Activated CD8-positive, alpha-beta T cell treated with anti-CD3 and anti-CD28 coated beads, Interleukin-2, amount 10 ng/mL, durations not matched to agents 7 days and 5 days (primary cell): ENCODE measurements at regions of chr4 and their contacts with region 1.

Region 1: DNA sequence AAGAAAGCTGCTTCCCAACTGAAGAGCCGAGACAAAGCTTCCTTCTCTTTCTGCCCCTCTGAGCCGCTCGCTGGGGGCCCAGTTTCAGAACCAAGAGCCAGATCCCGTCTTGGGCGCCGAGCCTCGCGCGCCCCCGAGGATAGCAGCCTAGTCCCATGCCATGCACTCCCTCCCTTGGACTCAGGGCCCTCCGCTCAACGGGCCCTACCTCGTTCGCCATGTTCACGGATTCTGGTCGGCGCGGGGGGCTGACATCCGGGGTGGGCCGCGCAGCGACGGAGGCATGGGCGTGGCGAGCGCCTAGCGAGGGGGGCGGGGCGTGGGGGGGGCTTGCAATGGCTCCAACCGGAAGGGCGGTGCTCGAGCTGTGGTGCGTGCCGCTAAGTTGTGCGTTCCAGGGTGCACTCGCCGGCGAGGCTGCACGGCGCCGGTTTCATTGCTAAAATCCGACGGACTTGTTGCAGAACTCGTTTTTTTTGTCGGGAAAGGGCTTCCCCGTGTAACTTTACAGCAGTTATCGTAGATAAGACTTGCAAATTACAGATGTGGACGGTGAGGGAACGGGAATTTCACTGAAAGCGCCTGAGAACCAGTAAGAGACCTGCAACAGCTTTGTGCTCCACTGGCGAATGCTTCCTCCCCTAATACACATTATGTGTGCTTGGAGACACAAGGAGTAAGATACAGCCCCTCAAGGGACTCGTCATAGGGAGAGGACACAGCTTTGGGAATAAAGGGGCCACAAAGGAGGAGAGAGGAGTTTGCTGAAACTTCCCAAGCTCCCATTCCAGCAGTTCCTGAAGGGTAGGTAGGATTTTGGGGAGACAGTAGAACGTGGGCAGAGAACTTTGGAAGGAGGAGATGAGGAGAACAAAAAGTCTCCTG is at the start of gene ADH5:
- DNase-seq: peak; percentile 94
- ATAC-seq: peak; percentile 97
- H3K4me3 Mint-ChIP-seq: peak within 1 kb of the TSS; percentile 97
- H3K27ac Mint-ChIP-seq: peak within 1 kb of the TSS; percentile 99
- H3K4me1 Mint-ChIP-seq: peaks cover 45% of the 10 kb centered on the region
- H3K27me3 Mint-ChIP-seq: no peaks in the 10 kb centered on the region
- total RNA-seq, gene ADH5: 107 to 113 TPM

Region 2: DNA sequence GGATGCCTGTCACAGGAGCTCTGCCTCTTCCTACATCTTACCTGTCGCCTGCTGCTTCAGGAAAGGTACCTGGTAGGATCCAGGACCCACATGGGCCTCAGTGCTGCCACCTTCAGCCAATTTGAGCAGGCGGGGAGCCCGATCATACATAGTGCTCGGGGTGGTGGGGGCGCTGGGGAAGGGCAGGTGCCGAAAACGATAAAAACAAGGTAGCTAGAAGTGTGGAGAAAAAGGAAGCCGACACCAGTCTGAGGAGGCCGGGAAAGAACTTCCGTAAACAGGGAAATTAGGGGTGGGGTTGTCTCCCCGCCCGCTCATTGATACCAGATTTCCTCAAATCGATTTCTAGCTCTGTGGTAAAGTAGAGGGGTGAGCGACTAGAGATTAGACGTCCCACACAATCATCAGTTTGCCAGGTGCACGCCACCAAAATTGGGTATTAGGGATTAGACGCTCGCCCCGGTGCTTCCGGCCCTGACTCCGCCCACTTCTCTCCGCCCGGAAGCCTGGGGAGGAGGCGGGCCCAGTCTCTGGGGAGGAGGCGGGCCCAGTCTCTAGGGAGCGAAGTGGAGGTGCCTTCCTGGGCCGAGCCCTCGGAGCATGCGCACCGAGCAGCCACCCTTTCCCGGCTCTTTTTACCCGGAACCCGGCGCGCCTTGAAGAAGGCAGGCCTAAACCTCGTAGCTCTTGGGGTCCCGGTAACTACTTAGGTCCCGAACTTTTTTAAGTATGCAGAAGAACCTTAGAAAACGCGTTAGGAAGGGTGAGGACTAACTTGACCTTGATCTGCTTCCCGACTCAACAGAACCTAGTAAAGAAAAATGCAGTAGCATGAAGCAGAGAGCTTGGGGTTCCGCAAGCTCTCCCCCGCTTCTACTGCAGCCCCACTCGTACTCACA is 945.5 kb before region 1 on chr4 and contains the start of gene STPG2:
- CTCF ChIA-PET with region 1: interaction called, 3 read pairs
- POLR2A ChIA-PET with region 1: interaction called, 11 read pairs
- DNase-seq: peak; percentile 94
- ATAC-seq: peak; percentile 100
- H3K4me3 Mint-ChIP-seq: peak within 1 kb of the TSS; percentile 87
- H3K27ac Mint-ChIP-seq: peak within 1 kb of the TSS; percentile 94
- H3K4me1 Mint-ChIP-seq: peaks cover 26% of the 10 kb centered on the region
- H3K27me3 Mint-ChIP-seq: peaks cover 4% of the 10 kb centered on the region
- total RNA-seq, gene STPG2: not detected

Region 3: GRCh38 chr4:99043346-99043745 is 45.4 kb before region 1 on chr4:
- CTCF ChIA-PET with region 1: interaction called, 3 read pairs
- POLR2A ChIA-PET with region 1: interaction called, 12 read pairs
- DNase-seq: no peak
- ATAC-seq: peak; percentile 77
- H3K4me3 Mint-ChIP-seq: peak overlapping the region; percentile 46
- H3K27ac Mint-ChIP-seq: peak overlapping the region; percentile 89
- H3K4me1 Mint-ChIP-seq: peaks cover 17% of the 10 kb centered on the region
- H3K27me3 Mint-ChIP-seq: no peaks in the 10 kb centered on the region